Calu3 (cell line): ENCODE measurements at regions of chr3 and their contacts with region 1.

Region 1: DNA sequence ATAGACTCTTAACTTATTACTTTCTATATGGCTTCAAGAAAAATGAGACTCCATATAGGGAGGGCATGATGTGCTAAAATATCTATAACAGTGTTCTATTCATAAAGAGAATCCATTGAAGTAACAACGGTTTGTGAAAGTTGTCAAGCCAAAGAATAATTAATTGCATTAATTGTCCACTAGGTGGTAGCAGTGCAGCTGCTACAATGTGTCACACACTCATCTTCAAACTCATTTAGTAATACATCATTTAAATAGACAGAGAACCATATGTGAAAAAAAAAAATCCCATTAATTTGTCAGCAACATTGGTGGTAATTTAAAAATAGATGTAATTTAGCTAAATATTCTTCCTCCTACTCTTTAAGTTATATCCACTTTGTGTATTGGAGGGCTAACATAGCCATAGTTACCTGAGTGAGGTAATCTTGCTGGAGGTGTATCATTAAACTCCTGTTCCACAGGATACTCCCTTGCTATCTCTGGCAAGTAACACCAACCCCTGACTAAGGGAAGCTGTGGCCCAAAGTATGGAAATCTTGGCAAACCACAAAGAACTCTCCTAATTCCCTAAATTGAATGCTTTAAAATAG is 3.7 kb upstream of the CPA3 start:
- DNase-seq: no peak
- H3K4me3 Mint-ChIP-seq: no peak overlapping the region
- H3K27ac Mint-ChIP-seq: no peak overlapping the region
- H3K4me1 Mint-ChIP-seq: no peaks in the 10 kb centered on the region
- H3K27me3 Mint-ChIP-seq: peaks cover under 1% of the 10 kb centered on the region
- CTCF ChIP-seq: peak; percentile 82

Region 2: GRCh38 chr3:148727247-148727646 is 134.1 kb before region 1 on chr3:
- CTCF ChIA-PET with region 1: no interaction called
- intact Hi-C with region 1: loop called (anchors 5 kb)
- DNase-seq: peak; percentile 76
- H3K4me3 Mint-ChIP-seq: no peak overlapping the region
- H3K27ac Mint-ChIP-seq: no peak overlapping the region
- H3K4me1 Mint-ChIP-seq: peaks cover 8% of the 10 kb centered on the region
- H3K27me3 Mint-ChIP-seq: no peaks in the 10 kb centered on the region
- CTCF ChIP-seq: peak; percentile 71